AG04450 (cell line): ENCODE measurements at regions of chr1 and their contacts with region 1.

Region 1: DNA sequence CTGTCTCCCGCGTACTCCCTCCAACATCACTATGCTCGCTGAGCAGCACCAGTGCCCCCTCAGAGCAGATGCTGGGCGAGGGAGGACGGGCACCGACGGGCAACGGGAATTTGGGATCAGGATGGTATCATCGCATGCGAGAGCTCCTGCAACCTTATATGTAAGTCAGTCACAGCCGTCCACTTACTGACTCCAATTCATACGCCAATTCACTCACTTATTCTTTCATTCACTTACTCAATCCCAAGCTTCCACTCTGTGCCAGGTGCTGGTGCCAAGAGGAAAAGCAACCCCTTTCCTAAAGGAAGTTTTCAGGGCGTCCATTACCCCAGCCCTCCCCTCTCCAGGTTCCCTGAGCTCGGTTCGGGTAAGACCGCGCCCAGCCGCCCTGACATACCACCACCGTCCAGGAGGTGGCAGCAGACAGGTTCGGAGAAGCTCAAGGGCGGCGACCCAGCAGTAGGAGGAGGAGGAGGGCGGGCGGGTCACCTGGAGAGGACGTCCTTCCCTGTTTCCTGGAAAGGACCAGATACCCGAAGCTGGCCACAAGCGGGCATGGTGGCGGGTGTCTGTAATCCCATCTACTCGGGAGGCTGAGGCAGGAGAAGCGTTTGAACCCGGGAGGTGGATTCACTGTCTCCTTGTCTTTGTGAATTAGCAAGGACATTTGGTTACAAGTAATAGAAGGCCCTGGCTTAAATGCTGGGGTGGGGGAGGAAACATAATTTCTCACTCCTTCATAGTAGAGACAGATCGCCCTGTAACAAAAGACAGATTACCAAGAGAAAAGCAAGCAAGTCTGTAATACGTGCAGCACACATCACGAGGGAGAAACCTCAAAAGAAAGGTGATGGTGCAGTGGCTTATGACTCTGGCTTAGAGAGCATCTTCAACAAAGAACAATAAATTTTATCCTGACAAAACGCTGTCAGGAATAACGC is 7.6 kb upstream of the IL22RA1 start:
- DNase-seq: peak; percentile 21
- H3K4me3 ChIP-seq: 0 out of 2 replicates have a peak overlapping the region, but pooled peaks have one; percentile 18
- H3K27ac ChIP-seq: no peak overlapping the region
- H3K27me3 ChIP-seq: peaks cover 40% of the 10 kb centered on the region
- CTCF ChIP-seq: peak; percentile 76

Region 2: DNA sequence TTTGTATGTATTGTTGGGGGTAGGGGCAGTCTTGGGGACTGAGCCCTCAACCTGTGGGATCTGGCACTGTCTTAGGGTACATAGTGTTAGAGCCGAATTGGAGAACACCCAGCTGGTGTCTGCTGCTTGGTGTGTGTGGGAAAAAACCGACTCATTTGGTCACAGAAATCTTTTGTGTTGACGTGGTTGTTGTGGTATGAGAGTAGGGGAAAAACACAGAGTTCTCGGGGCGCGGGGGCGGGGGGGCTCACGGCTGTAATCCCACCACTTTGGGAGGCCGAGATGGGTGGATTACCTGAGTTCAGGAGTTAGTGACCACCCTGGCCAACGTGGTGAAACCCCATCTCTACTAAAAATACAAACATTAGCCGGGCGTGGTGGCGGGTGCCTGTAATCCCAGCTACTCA is 155.1 kb before region 1 on chr1:
- CTCF ChIA-PET with region 1: no interaction called
- POLR2A ChIA-PET with region 1: no interaction called
- DNase-seq: no peak
- H3K4me3 ChIP-seq: no peak overlapping the region
- H3K27ac ChIP-seq: no peak overlapping the region
- H3K27me3 ChIP-seq: no peaks in the 10 kb centered on the region
- CTCF ChIP-seq: no peak

Region 3: GRCh38 chr1:24133819-24134775 is 16.4 kb before region 1 on chr1:
- CTCF ChIA-PET with region 1: interaction called, 11 read pairs
- POLR2A ChIA-PET with region 1: no interaction called
- DNase-seq: no peak
- H3K4me3 ChIP-seq: no peak overlapping the region
- H3K27ac ChIP-seq: no peak overlapping the region
- H3K27me3 ChIP-seq: peaks cover 25% of the 10 kb centered on the region
- CTCF ChIP-seq: no peak

Region 4: GRCh38 chr1:24161270-24161669 is 10.8 kb after region 1 on chr1:
- CTCF ChIA-PET with region 1: interaction called, 11 read pairs
- POLR2A ChIA-PET with region 1: no interaction called
- DNase-seq: no peak
- H3K4me3 ChIP-seq: no peak overlapping the region
- H3K27ac ChIP-seq: no peak overlapping the region
- H3K27me3 ChIP-seq: peaks cover 36% of the 10 kb centered on the region
- CTCF ChIP-seq: no peak

Region 5: GRCh38 chr1:24172598-24172997 is 22.1 kb after region 1 on chr1:
- CTCF ChIA-PET with region 1: interaction called, 12 read pairs
- POLR2A ChIA-PET with region 1: no interaction called
- DNase-seq: no peak
- H3K4me3 ChIP-seq: no peak overlapping the region
- H3K27ac ChIP-seq: peak overlapping the region; percentile 31
- H3K27me3 ChIP-seq: peaks cover 39% of the 10 kb centered on the region
- CTCF ChIP-seq: no peak

Region 6: DNA sequence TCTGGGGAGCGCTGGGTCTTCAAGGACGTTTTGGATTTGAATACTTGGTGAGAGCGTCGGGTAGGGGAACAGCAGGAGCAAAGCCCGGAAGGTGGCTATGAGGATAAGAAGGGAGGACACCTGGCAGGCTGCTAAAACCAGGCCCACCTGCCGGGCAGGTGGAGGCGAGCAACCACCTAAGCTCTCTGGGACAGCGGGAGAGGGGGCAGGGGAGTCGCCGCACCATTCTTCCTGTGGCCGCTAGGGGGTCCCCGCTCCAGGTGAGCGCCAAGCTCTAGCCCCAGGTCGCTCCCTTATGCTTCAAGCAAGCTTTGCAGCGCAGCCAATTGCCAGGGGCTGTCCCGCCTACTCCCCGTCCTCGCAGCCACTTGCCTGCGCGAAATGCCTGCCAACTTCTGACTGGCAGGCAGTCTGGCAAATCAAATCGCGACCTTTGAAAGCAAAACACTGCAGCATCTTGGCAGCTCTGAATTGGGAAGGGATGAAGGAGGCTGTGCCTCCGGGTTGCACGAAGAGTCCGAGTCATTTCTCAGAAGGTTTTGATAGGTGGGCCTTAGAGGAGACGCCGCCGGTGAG is 264.9 kb after region 1 on chr1 and contains the start of gene NIPAL3:
- CTCF ChIA-PET with region 1: interaction called, 10 read pairs
- POLR2A ChIA-PET with region 1: no interaction called
- DNase-seq: peak; percentile 98
- H3K4me3 ChIP-seq: peak within 1 kb of the TSS; percentile 94
- H3K27ac ChIP-seq: peak within 1 kb of the TSS; percentile 94
- H3K27me3 ChIP-seq: no peaks in the 10 kb centered on the region
- CTCF ChIP-seq: peak; percentile 68
- polyA plus RNA-seq, gene NIPAL3: 46.5 and 48.5 TPM in 2 replicates